HepG2 (cell line): ENCODE measurements at regions of chr4 and their contacts with region 1.

Region 1: GRCh38 chr4:102620697-102621497 is 119.7 kb downstream of the NFKB1 start:
- DNase-seq: peak; percentile 92
- ATAC-seq: peak; percentile 93
- H3K4me3 ChIP-seq: peak overlapping the region; percentile 42 to 60 (median 49); a peak in 4 of 6 replicates
- H3K27ac ChIP-seq: peak overlapping the region; percentile 88
- H3K4me1 ChIP-seq: peaks cover 59% of the 10 kb centered on the region
- H3K27me3 ChIP-seq: no peaks in the 10 kb centered on the region
- CTCF ChIP-seq: peak; percentile 87
- EP300 ChIP-seq: peak in 1 of 2 experiments; percentile 54; a peak in 1 of 4 replicates
- POLR2A ChIP-seq: peak; percentile 42 to 79; a peak in 3 of 4 replicates
- RAD21 ChIP-seq: peak; percentile 76

Region 2: GRCh38 chr4:102449751-102450352 is 171.0 kb before region 1 on chr4:
- CTCF ChIA-PET with region 1: interaction called, 3 read pairs
- POLR2A ChIA-PET with region 1: no interaction called
- in situ Hi-C with region 1: loop called (anchors 10 kb)
- intact Hi-C with region 1: loop called (anchors 1 kb)
- DNase-seq: peak; percentile 65
- ATAC-seq: peak; percentile 81
- H3K4me3 ChIP-seq: no peak overlapping the region
- H3K27ac ChIP-seq: no peak overlapping the region
- H3K4me1 ChIP-seq: peaks cover 3% of the 10 kb centered on the region
- H3K27me3 ChIP-seq: no peaks in the 10 kb centered on the region; a peak in 1 of 5 replicates
- CTCF ChIP-seq: peak; percentile 82
- EP300 ChIP-seq: no peak
- POLR2A ChIP-seq: no peak
- RAD21 ChIP-seq: peak; percentile 64

Region 3: GRCh38 chr4:102717448-102718092 is 96.7 kb after region 1 on chr4:
- CTCF ChIA-PET with region 1: no interaction called
- POLR2A ChIA-PET with region 1: interaction called, 3 read pairs
- in situ Hi-C with region 1: no loop called
- intact Hi-C with region 1: loop called (anchors 10 kb)
- DNase-seq: peak; percentile 73
- ATAC-seq: peak; percentile 85
- H3K4me3 ChIP-seq: no peak overlapping the region
- H3K27ac ChIP-seq: peak overlapping the region; percentile 23
- H3K4me1 ChIP-seq: peaks cover 57% of the 10 kb centered on the region
- H3K27me3 ChIP-seq: no peaks in the 10 kb centered on the region
- CTCF ChIP-seq: no peak
- EP300 ChIP-seq: no peak
- POLR2A ChIP-seq: no peak
- RAD21 ChIP-seq: no peak

Region 4: DNA sequence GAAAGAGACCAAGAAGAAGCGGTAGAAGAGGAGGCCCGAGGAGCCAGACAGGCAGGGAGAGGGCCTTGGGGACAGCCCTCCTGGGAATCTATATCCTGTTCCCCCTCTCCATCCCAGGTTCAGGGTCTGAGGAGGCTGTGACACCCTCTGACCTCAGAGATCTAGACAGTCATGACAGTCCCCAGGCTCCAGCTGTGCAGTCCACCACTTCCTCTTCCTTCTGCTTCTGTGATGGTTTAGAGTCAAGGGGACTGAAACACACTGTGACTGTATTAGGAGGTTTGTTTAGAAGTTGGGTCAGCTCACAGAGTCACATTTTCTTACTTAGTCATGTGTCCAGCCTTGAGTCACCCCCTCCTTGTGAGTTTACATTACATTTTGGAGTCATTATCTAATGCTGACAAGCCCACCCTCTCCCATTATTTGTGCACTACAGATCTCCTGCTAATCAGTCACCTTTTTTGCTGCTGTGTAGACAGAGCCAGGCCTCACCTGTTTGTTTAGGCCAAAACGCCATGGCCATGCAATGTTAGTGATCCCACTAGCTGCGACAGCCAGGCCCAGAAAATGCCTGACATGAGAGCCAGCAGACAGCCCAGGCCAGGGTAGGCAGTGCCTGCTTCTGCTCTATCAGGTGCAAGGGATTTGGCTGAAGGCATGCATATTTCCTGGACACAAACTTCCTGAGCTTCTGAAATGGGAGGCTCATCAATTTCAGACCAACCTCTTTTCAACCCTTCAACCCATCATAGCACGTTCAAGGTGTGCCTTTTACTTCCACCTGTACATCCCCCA is 113.9 kb after region 1 on chr4:
- CTCF ChIA-PET with region 1: no interaction called
- POLR2A ChIA-PET with region 1: no interaction called
- in situ Hi-C with region 1: no loop called
- intact Hi-C with region 1: no loop called
- DNase-seq: peak; percentile 65
- ATAC-seq: peak; percentile 74
- H3K4me3 ChIP-seq: no peak overlapping the region
- H3K27ac ChIP-seq: peak overlapping the region; percentile 20
- H3K4me1 ChIP-seq: peaks cover 51% of the 10 kb centered on the region
- H3K27me3 ChIP-seq: no peaks in the 10 kb centered on the region
- CTCF ChIP-seq: no peak
- EP300 ChIP-seq: no peak
- POLR2A ChIP-seq: no peak
- RAD21 ChIP-seq: no peak

Region 5: DNA sequence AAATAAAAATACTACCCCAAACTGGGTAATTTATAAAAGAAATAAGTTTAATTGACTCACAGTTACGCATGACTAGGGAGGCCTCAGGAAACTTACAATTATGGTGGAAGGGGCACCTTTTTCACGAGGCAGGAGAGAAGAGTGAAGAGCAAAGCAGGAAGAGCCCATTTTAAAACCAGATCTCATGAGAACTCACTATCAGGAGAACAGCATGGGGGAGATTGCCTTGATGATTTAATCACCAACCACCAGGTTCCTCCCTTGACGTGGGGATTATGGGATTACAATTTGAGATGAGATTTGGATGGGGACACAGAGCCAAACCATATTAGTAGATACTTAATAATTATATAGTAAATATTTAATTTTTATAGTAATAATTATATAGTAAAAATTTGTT is 258.0 kb after region 1 on chr4:
- CTCF ChIA-PET with region 1: no interaction called
- POLR2A ChIA-PET with region 1: no interaction called
- in situ Hi-C with region 1: no loop called
- intact Hi-C with region 1: loop called (anchors 5 kb)
- DNase-seq: no peak
- ATAC-seq: peak; percentile 34
- H3K4me3 ChIP-seq: no peak overlapping the region
- H3K27ac ChIP-seq: peak overlapping the region; percentile 65
- H3K4me1 ChIP-seq: peaks cover 34% of the 10 kb centered on the region
- H3K27me3 ChIP-seq: no peaks in the 10 kb centered on the region
- CTCF ChIP-seq: no peak
- EP300 ChIP-seq: no peak
- POLR2A ChIP-seq: no peak
- RAD21 ChIP-seq: no peak

Region 6: DNA sequence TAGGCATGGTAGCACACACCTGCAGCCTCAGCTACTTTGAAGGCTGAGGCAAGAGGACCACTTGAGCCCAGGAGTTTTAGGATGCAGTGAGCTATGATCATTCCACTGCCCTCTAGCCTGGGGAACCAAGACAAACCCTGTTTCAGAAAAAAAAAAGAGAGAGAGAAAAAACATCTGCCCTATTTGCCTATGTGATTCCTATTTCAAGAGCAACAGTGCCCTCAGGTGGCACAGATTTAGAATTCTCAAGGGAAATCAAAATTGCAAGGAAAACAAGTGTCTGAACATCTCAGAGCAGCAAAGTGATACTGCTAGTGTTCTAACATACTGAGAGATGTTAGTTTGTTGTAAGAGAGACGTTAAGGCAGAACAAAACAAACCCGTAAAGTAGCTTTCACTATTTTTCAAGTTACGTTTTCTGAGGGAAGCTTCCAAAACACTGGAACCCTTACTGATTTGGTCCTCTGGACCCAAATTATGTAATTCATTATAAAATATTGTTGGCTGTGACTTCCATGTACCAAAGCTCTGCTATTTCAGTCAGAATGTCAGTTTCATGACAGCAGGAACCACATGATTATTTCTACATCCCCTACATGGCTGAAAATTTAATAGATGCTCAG is 470.8 kb after region 1 on chr4:
- CTCF ChIA-PET with region 1: interaction called, 4 read pairs
- POLR2A ChIA-PET with region 1: no interaction called
- in situ Hi-C with region 1: loop called (anchors 5 kb)
- intact Hi-C with region 1: loop called (anchors 1 kb)
- DNase-seq: peak; percentile 72
- ATAC-seq: peak; percentile 68
- H3K4me3 ChIP-seq: no peak overlapping the region
- H3K27ac ChIP-seq: no peak overlapping the region
- H3K4me1 ChIP-seq: peaks cover 15% of the 10 kb centered on the region
- H3K27me3 ChIP-seq: no peaks in the 10 kb centered on the region
- CTCF ChIP-seq: peak; percentile 80
- EP300 ChIP-seq: no peak
- POLR2A ChIP-seq: no peak
- RAD21 ChIP-seq: peak; percentile 77